Natural killer cell (primary cell): ENCODE measurements at regions of chr1 and their contacts with region 1.

Region 1: GRCh38 chr1:58546520-58547308 is at the start of gene OMA1:
- DNase-seq: peak; percentile 98 to 99
- ATAC-seq: peak; percentile 91 to 99 (median 92)
- H3K4me3 ChIP-seq: peak within 1 kb of the TSS; percentile 53
- H3K4me3 Mint-ChIP-seq: peak within 1 kb of the TSS; percentile 94
- H3K27ac ChIP-seq: peak within 1 kb of the TSS; percentile 99
- H3K27ac Mint-ChIP-seq: peak within 1 kb of the TSS; percentile 93 to 98
- H3K4me1 ChIP-seq: peaks cover 10% of the 10 kb centered on the region
- H3K4me1 Mint-ChIP-seq: peaks cover 19 to 34% of the 10 kb centered on the region in 2 donors
- H3K27me3 ChIP-seq: no peaks in the 10 kb centered on the region
- H3K27me3 Mint-ChIP-seq: peaks cover 5 to 17% of the 10 kb centered on the region in 2 donors
- CTCF ChIP-seq: peak; percentile 88
- total RNA-seq, gene OMA1: 27.2 to 41.1 (median 31.2) TPM

Region 2: DNA sequence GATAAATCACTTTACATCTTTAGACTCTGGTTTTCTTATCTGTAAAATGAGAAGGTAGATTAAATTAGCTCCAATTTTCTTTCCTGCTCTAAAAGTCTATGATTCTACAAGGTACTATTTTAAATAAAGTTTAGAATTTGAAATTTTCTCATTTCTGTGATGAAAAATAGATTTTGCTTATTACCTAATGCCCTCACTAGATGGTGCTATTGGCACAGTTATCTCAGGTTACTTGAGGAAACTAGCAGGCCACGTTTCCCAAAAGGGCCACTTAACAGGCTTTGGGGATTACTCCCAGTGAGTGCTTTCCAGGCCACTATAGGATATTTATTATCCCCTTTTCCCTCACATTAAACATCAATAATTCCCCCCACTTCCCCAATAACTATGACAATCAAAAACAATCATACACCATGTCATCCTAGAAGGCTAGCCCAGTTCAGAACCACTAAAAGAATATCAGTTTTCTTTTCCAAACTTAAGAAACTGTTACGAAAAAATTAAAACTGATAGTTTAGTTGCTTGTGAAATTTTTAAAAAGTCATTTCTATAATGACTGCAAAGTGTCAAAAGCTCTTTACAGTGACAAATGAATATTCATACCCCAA is 30.8 kb before region 1 on chr1:
- intact Hi-C with region 1: loop called (anchors 1 kb)
- DNase-seq: peak in 1 of 2 donors; percentile 84
- ATAC-seq: peak; percentile 61 to 73 (median 70)
- H3K4me3 ChIP-seq: no peak overlapping the region
- H3K4me3 Mint-ChIP-seq: no peak overlapping the region
- H3K27ac ChIP-seq: no peak overlapping the region
- H3K27ac Mint-ChIP-seq: peak overlapping the region in 1 of 2 donors; percentile 79
- H3K4me1 ChIP-seq: no peaks in the 10 kb centered on the region
- H3K4me1 Mint-ChIP-seq: peaks cover 0 to 7% of the 10 kb centered on the region in 2 donors
- H3K27me3 ChIP-seq: no peaks in the 10 kb centered on the region
- H3K27me3 Mint-ChIP-seq: no peaks in the 10 kb centered on the region
- CTCF ChIP-seq: peak; percentile 83

Region 3: DNA sequence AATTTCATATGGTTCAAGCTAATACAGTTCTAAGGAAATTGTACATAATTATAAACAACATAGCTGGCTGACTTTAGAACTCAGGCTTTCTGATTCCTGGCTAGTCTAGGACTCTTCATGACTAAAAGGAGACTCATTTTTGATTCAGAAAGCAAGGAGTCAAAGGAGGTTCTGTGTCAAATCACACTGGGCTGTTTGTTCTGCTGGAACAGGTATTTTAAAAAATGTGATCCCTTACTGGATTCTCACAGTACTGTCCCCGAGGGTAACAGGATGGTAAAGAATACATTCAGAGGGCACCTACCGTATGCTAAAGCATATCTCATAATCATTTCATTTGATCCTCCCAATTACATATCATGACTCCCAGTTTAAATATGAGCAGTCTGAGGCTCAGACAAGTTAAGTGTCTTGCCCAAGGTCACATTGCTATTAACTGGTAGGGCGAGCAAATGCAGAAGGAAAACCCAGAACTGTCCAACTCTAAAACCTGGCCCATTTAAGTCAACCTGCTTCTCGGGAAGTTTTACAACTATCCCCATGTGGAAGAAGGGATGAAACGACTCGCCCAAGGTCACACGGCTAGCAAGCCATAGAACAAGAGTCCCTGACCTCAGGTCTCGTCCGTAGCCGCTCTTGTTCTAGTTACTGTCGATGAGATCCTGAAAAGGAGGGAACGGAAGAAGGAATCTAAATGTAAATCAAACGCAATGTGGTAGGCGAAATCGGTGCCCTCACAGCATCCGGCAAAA is 152.5 kb after region 1 on chr1:
- intact Hi-C with region 1: loop called (anchors 1 kb)
- DNase-seq: peak in 1 of 2 donors; percentile 10
- ATAC-seq: peak; percentile 5 to 21 (median 8)
- H3K4me3 ChIP-seq: peak overlapping the region; percentile 89
- H3K4me3 Mint-ChIP-seq: peak overlapping the region; percentile 96
- H3K27ac ChIP-seq: peak overlapping the region; percentile 88
- H3K27ac Mint-ChIP-seq: peak overlapping the region; percentile 89 to 99
- H3K4me1 ChIP-seq: peaks cover 5% of the 10 kb centered on the region
- H3K4me1 Mint-ChIP-seq: peaks cover 0 to 17% of the 10 kb centered on the region in 2 donors
- H3K27me3 ChIP-seq: no peaks in the 10 kb centered on the region
- H3K27me3 Mint-ChIP-seq: no peaks in the 10 kb centered on the region
- CTCF ChIP-seq: no peak